Activated CD8-positive, alpha-beta memory T cell treated with anti-CD3 and anti-CD28 coated beads, Interleukin-2, amount 10 ng/mL, durations not matched to agents 7 days and 5 days (primary cell): ENCODE measurements at regions of chr1 and their contacts with region 1.

Region 1: DNA sequence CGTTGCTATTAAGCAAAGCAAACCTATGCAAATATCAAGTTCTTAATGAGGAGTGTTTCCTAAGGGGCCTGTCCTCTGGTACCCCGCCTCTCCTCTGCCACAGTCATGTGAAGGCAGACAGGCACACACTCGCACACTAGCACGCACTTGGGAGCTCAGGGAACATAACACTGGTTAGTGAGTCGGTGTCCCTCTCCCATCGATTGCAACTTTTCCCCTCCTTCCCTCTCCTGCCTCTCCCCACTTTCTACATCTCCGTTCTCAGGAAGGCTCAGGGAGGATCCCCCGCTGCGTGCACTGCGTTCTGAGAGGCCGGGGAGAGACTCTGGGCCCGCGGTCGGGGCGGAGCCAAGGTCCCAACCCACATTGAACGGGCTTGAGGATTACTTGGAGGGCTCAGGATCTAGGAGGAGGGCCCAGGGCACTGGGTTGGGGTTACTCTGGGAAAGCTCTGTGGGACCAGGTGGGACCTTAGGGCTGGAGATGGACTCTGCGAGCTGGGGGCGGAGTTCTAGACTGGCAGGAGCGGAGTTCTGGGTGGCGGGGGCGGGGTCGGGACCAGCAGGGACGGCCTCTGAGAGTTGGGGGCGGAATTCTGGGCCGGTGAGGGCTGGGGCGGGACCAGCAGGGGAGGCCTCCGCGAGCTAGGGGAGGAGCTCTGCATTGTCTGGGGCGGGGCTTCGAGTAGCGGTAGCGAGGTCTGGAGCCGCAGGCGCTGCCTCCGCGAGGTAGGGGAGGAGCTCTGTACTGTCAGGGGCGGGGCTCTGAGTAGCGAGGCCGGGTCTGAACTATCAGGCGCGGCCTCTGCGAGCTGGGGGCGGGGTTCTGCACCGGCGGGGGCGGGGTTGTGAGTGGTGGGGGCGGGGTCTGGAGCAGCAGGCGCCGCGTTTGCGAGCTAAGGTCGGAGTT is 533 bp upstream of the LEPR start:
- DNase-seq: peak; percentile 100
- ATAC-seq: peak; percentile 94
- H3K4me3 Mint-ChIP-seq: no peak overlapping the region
- H3K27ac Mint-ChIP-seq: peak overlapping the region; percentile 94
- H3K4me1 Mint-ChIP-seq: peaks cover 28% of the 10 kb centered on the region
- H3K27me3 Mint-ChIP-seq: no peaks in the 10 kb centered on the region

Region 2: DNA sequence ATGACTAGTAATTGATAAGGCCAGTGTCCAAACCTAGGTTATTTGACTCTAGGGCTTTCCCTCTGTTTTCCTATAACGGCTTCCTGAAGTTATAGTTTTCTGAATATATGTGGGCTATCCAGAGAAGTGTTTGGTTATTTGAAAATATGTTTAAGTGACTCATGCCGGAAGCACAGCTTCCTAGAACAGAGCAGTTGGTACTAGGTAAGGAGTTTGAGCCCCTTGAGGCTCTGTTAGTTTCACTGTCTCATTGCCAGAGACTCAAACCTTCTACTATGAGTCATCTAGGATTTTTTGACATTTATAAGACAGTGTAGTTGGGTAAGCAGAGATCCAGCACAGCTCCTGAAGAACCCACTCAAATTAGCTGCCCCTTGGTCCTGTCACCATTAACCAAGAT is 26.6 kb before region 1 on chr1:
- CTCF ChIA-PET with region 1: interaction called, 19 read pairs
- DNase-seq: peak; percentile 69
- ATAC-seq: peak; percentile 97
- H3K4me3 Mint-ChIP-seq: peak overlapping the region; percentile 40
- H3K27ac Mint-ChIP-seq: peak overlapping the region; percentile 92
- H3K4me1 Mint-ChIP-seq: peaks cover 88% of the 10 kb centered on the region
- H3K27me3 Mint-ChIP-seq: no peaks in the 10 kb centered on the region

Region 3: GRCh38 chr1:65630855-65631254 is 210.9 kb after region 1 on chr1:
- CTCF ChIA-PET with region 1: no interaction called
- DNase-seq: no peak
- ATAC-seq: no peak
- H3K4me3 Mint-ChIP-seq: no peak overlapping the region
- H3K27ac Mint-ChIP-seq: no peak overlapping the region
- H3K4me1 Mint-ChIP-seq: no peaks in the 10 kb centered on the region
- H3K27me3 Mint-ChIP-seq: no peaks in the 10 kb centered on the region